Stomach (tissue), 19 donors: ENCODE measurements at regions of chr12 and their contacts with region 1.

Region 1: DNA sequence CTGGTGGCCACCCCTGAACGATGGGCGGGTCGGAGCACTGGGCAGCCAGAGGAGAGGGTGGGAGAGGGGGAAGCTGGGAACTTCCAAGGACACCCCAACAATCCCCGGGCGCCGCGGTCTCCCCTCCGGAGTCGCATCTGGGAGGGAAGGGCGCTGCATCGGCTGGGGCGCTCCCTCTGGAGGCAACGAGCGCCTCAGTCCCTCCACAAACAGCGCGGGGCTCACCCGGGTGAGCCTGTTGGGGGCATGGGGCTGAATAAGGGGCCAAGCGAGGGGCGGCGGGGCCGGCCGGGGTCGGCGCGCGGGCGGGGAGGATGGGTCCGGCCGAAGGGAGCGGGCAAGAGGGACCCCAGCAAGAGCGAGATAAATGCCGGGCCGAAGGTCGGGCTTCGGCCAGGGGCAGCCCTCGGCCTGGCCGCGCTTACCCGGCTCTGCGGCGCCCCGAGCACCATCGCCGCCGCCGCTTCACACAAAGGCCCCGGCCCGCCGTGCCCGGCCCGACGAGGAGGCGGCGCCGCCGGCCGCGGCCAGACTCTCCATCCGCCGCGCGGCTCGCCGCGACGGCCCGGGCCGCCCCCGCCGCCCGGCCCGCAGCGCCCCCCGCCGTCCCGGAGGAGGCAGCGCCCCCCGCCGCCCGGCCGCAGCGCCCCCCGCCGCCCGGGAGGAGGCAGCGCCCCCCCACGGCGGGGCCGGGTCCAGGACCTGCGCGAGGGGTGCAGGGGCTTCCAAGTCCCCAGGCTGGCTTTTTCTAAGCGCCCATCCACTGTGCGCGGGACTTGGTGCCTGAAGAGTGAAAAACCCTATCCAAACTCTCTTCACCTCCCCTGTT is at the start of gene ZBTB39:
- DNase-seq: peak; percentile 67 to 87
- H3K4me3 ChIP-seq: peak within 1 kb of the TSS; percentile 92 to 98 (median 97)
- H3K27ac ChIP-seq: peak within 1 kb of the TSS; percentile 74 to 88 (median 84)
- H3K4me1 ChIP-seq: peaks cover 19 to 53% (median 39%) of the 10 kb centered on the region in 4 donors
- H3K27me3 ChIP-seq: no peaks in the 10 kb centered on the region
- CTCF ChIP-seq: peak in 3 of 7 experiments; percentile 29 to 71 (median 56)
- EP300 ChIP-seq: no peak
- POLR2A ChIP-seq: no peak
- total RNA-seq, gene ZBTB39: 3.3 to 7.6 (median 4.9) TPM

Region 2: DNA sequence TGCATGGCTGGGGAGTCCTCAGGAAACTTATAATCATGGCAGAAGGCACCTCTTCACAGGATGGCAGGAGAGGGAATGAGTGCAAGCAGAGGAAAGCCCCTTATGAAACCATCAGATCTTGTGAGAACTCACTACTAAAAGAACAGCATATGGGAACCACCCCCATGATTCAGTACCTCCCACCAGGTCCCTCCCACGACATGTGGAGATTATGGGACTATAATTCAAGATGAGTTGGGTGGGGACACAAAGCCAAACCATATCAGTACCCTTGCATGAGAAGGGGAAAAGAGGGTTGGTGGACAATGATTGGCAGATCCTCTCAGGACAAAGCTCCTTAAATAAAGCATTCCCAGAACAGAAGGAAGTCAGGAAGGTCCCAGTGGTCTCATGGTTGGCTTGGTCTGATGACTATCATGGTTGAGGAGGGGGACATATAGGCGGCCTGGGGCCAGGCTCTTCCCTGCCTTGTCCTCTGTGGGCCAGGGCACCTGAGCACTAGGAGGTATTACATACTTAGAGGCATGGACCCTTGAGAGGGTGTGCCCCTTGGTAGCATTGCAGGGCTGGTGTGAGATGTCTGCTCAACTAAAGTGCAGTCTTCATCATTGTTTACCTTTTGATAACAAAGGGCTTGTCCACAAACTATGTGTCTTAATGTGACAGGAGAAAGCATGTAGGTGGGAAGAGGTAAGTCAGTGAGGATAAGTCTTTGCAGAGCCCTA is 220.9 kb before region 1 on chr12:
- intact Hi-C with region 1: no loop called
- DNase-seq: no peak
- H3K4me3 ChIP-seq: no peak overlapping the region
- H3K27ac ChIP-seq: no peak overlapping the region
- H3K4me1 ChIP-seq: no peaks in the 10 kb centered on the region
- H3K27me3 ChIP-seq: no peaks in the 10 kb centered on the region
- CTCF ChIP-seq: no peak
- EP300 ChIP-seq: no peak
- POLR2A ChIP-seq: no peak

Region 3: GRCh38 chr12:57063991-57064685 is 57.9 kb after region 1 on chr12:
- intact Hi-C with region 1: loop called (anchors 5 kb)
- DNase-seq: peak in 1 of 2 donors; percentile 55
- H3K4me3 ChIP-seq: no peak overlapping the region
- H3K27ac ChIP-seq: peak overlapping the region in 1 of 5 donors; percentile 43
- H3K4me1 ChIP-seq: peaks cover 0 to 15% (median 4%) of the 10 kb centered on the region in 4 donors
- H3K27me3 ChIP-seq: no peaks in the 10 kb centered on the region
- CTCF ChIP-seq: no peak
- EP300 ChIP-seq: no peak
- POLR2A ChIP-seq: no peak